CD14-positive monocyte (primary cell): ENCODE measurements at regions of chr6 and their contacts with region 1.

Region 1: GRCh38 chr6:24933868-24934401 is 1.8 kb downstream of the RIPOR2 start:
- DNase-seq: peak in 2 of 3 donors; percentile 60 to 70
- H3K4me3 ChIP-seq: peak overlapping the region; percentile 78 to 87 (median 83)
- H3K4me3 Mint-ChIP-seq: peak overlapping the region; percentile 95 to 98
- H3K27ac ChIP-seq: peak overlapping the region in 1 of 2 donors; percentile 88
- H3K27ac Mint-ChIP-seq: peak overlapping the region; percentile 37 to 98 (median 90)
- H3K4me1 ChIP-seq: peaks cover 79 to 89% of the 10 kb centered on the region in 2 donors
- H3K4me1 Mint-ChIP-seq: peaks cover 94% of the 10 kb centered on the region
- H3K27me3 ChIP-seq: no peaks in the 10 kb centered on the region
- H3K27me3 Mint-ChIP-seq: no peaks in the 10 kb centered on the region
- CTCF ChIP-seq: peak; percentile 95

Region 2: GRCh38 chr6:24855395-24856245 is 78.3 kb before region 1 on chr6:
- intact Hi-C with region 1: loop called in 1 of 2 experiments (anchors 5 kb)
- DNase-seq: peak; percentile 61 to 74 (median 69)
- H3K4me3 ChIP-seq: no peak overlapping the region
- H3K4me3 Mint-ChIP-seq: no peak overlapping the region
- H3K27ac ChIP-seq: peak overlapping the region in 1 of 2 donors; percentile 92
- H3K27ac Mint-ChIP-seq: peak overlapping the region in 6 of 7 donors; percentile 80 to 98 (median 94)
- H3K4me1 ChIP-seq: peaks cover 46 to 54% of the 10 kb centered on the region in 2 donors
- H3K4me1 Mint-ChIP-seq: peaks cover 50% of the 10 kb centered on the region
- H3K27me3 ChIP-seq: no peaks in the 10 kb centered on the region
- H3K27me3 Mint-ChIP-seq: peaks cover 0 to 2% (median 0%) of the 10 kb centered on the region in 3 donors
- CTCF ChIP-seq: peak; percentile 88

Region 3: GRCh38 chr6:24951811-24952299 is 17.9 kb after region 1 on chr6:
- intact Hi-C with region 1: loop called in 1 of 2 experiments (anchors 2 kb)
- DNase-seq: peak; percentile 92 to 97 (median 94)
- H3K4me3 ChIP-seq: peak overlapping the region in 1 of 3 experiments; percentile 60
- H3K4me3 Mint-ChIP-seq: peak overlapping the region; percentile 55 to 80
- H3K27ac ChIP-seq: peak overlapping the region; percentile 62 to 87
- H3K27ac Mint-ChIP-seq: peak overlapping the region; percentile 86 to 99 (median 96)
- H3K4me1 ChIP-seq: peaks cover 65 to 77% of the 10 kb centered on the region in 2 donors
- H3K4me1 Mint-ChIP-seq: peaks cover 83% of the 10 kb centered on the region
- H3K27me3 ChIP-seq: no peaks in the 10 kb centered on the region
- H3K27me3 Mint-ChIP-seq: no peaks in the 10 kb centered on the region
- CTCF ChIP-seq: no peak

Region 4: DNA sequence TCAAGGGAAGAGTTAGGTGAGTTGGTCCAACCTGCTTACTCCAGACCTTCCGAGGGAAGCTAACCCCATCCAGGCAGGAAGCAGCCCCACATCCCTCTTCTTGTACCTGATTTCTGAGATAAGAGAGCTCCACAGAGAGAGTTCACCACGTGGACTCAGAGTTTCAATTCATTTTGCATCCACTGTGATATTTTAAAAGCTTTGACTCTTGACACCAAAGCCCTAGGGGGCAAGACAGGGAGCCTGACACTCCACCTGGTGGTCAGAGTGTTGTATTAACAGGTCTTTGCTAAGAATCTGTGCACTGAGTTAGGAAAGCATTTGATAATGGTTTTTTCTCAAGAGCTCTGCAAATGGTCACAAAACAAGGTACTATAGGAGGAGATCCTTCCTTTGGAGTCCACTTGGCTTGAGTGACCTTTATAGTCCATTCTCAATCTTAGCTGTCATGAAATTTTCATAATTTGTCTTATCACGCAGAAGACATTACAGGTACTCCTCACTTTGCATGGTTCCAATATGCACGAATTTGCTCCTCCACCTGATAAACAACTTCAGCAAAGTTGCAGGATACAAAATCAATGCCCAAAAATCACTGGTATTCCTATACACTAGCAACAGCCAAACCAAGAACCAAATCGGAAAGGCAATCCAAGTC is 58.0 kb after region 1 on chr6:
- intact Hi-C with region 1: loop called (anchors 5 to 10 kb)
- DNase-seq: peak; percentile 69 to 80 (median 73)
- H3K4me3 ChIP-seq: no peak overlapping the region
- H3K4me3 Mint-ChIP-seq: peak overlapping the region in 1 of 2 donors; percentile 42
- H3K27ac ChIP-seq: peak overlapping the region in 1 of 2 donors; percentile 62
- H3K27ac Mint-ChIP-seq: peak overlapping the region in 6 of 7 donors; percentile 65 to 87 (median 72)
- H3K4me1 ChIP-seq: peaks cover 37 to 45% of the 10 kb centered on the region in 2 donors
- H3K4me1 Mint-ChIP-seq: peaks cover 44% of the 10 kb centered on the region
- H3K27me3 ChIP-seq: no peaks in the 10 kb centered on the region
- H3K27me3 Mint-ChIP-seq: no peaks in the 10 kb centered on the region
- CTCF ChIP-seq: peak; percentile 88

Region 5: DNA sequence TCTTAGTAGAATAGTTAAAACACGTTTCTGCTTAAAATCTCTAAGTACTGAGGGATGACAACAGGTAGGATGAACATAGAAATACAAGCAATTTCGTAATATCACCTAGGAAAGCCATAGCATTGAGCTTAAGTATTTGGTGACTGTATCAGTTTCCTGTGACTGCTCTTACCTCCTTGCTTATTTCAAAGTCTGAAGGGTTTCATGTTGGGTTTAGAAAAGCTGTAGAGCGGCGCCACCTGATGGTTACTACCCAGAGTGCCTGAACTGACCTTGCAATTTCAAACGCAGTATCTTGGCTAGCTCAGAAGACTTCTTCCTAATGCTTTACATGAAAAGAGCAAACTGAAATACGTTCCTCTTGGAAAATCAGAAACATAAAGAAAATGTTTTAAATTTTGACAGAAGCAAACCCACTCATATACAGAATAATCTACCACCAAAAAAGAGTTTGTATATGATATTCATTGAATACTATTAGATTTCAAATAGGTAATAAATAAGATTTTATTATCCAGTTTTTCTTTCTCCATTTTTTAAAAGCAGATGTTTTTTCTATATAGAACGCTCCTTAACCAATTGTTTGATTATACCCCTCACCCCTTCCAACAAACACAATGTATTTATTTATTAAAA is 84.1 kb after region 1 on chr6:
- intact Hi-C with region 1: loop called in 1 of 2 experiments (anchors 5 kb)
- DNase-seq: peak; percentile 75 to 85 (median 84)
- H3K4me3 ChIP-seq: no peak overlapping the region
- H3K4me3 Mint-ChIP-seq: no peak overlapping the region
- H3K27ac ChIP-seq: peak overlapping the region in 1 of 2 donors; percentile 78
- H3K27ac Mint-ChIP-seq: peak overlapping the region in 6 of 7 donors; percentile 73 to 92 (median 82)
- H3K4me1 ChIP-seq: peaks cover 51 to 53% of the 10 kb centered on the region in 2 donors
- H3K4me1 Mint-ChIP-seq: peaks cover 59% of the 10 kb centered on the region
- H3K27me3 ChIP-seq: no peaks in the 10 kb centered on the region
- H3K27me3 Mint-ChIP-seq: no peaks in the 10 kb centered on the region
- CTCF ChIP-seq: peak; percentile 88